ENCODE measurements at regions of chr3 and their contacts with region 1.

Region 1: DNA sequence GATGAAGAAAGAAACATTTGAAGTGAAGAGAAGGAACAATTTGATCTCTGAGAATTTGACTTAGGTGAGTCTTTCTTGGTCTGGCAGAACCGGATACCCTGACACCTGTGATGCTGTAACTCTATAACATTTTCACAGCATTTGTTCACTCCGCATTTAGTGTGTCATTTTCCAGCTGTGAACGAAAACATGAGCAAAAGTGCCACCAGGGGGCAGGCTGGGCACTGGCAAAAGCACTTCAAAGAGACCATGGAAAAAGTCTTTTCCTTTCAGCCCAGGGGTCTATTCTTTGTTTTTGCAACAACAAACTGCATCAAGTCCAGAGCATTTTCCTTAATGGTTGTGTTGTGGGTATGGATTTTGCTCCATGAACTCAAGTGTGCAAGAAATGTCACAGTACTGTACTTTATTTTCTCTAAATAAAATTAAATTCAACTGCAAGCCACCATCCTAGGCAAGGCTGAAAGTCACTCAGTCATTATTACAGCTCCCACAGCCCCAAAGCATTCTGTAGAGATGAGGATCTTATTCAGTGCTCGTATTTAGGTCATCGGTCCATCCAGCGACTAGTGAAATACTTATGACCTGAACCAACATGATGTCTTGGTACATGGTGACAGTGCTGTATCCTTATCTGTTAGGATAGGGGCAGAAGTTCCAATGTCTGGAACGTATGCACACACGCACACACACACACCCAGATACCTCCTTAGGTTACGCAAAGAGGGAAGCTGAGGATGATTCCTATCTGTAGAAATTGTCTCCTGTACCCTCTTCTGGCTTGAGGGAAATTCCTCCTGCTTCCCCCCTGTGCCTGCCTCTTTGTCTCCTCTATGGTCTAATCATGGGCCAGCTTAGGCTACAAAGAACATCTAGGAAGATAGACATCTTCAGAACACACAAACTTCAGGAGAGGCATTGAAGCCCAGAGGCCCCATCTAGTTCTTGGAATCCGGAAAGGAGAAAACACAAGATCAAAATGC is 125.5 kb downstream of the GADL1 start:
- DNase-seq: peak; percentile 75
- H3K4me3 ChIP-seq: no peak overlapping the region
- H3K27ac ChIP-seq: no peak overlapping the region
- H3K4me1 ChIP-seq: peaks cover 13% of the 10 kb centered on the region
- H3K27me3 ChIP-seq: no peaks in the 10 kb centered on the region

Region 2: DNA sequence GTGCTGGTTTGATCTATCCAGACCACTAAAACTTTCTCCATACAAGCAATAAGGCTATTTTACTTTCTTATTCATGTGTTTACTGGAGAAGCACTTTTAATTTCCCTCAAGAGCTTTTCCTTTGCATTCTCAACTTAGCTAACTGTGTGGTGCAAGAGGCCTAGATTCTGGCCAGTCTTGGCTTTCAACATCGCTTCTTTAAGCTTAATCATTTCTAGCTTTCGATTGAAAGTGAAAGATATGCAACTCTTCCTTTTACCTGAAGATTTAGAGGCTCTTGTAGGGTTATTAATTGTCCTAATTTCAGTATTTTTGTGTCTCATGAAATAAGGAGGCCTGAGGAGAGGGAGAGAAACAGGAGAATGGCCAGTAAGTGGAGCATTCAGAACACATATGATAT is 360.2 kb after region 1 on chr3:
- in situ Hi-C with region 1: loop called (anchors 10 kb)
- DNase-seq: no peak
- H3K4me3 ChIP-seq: no peak overlapping the region
- H3K27ac ChIP-seq: no peak overlapping the region
- H3K4me1 ChIP-seq: no peaks in the 10 kb centered on the region
- H3K27me3 ChIP-seq: no peaks in the 10 kb centered on the region

Measured in GM23248 (cell line).